Activated CD4-positive, alpha-beta T cell treated with anti-CD3 and anti-CD28 coated beads for 36 hours (primary cell): ENCODE measurements at regions of chr1 and their contacts with region 1.

Region 1: DNA sequence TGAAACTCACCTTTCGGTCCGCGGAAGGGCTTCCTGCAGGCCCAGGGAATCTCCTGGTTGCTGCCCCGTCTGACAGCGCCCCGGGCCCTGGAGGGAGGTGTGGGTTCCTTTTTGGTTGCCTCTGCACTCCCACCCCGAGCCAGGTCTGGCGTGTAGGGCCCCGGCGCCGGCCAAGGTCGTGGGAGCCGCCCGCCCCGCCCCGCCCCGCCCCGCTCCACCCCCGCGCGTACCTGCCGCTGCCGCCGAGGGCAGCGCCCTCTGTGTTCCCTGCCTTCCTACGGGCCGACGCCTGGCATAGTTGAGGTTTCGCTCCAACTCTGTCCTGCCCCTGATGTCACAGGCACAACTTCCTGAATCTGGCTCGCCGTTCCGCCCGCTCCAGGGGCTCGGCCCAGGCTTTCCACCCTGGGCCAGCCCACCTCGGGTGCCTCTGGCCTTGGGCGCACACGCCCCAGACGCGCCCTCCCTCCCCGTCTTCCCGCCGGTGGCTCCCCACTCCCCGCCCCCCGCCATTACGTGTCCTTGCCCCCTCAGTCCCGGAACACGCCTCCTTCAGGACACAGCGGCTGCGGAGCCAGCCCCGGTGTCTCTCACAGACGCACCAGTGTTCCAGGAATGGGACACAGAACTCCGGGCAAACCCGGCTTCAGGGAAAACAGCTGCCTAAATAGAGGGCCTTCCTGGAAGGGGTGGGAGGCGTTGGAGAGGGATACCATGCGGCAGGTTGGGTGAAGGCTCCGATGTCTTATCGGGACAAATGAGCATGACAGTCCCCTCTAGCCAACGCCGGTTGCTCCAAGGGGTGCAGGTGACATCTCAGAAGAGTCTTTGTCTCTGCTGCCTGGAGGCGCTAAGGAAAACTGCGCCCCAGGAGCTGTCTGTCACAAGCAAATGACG is at the start of gene KIAA0040:
- DNase-seq: peak; percentile 81
- ATAC-seq: peak; percentile 65
- H3K4me3 Mint-ChIP-seq: peak within 1 kb of the TSS; percentile 99
- H3K27ac Mint-ChIP-seq: peak within 1 kb of the TSS; percentile 93
- H3K4me1 Mint-ChIP-seq: peaks cover 47% of the 10 kb centered on the region
- H3K27me3 Mint-ChIP-seq: no peaks in the 10 kb centered on the region
- total RNA-seq, gene KIAA0040: 25.4 to 26.1 TPM

Region 2: GRCh38 chr1:173867753-173868265 is 1325.1 kb before region 1 on chr1 and contains the start of gene GAS5:
- CTCF ChIA-PET with region 1: no interaction called
- POLR2A ChIA-PET with region 1: no interaction called
- intact Hi-C with region 1: loop called (anchors 2 to 10 kb)
- DNase-seq: peak; percentile 100
- ATAC-seq: peak; percentile 82
- H3K4me3 Mint-ChIP-seq: peak within 1 kb of the TSS; percentile 91
- H3K27ac Mint-ChIP-seq: peak within 1 kb of the TSS; percentile 97
- H3K4me1 Mint-ChIP-seq: peaks cover 57% of the 10 kb centered on the region
- H3K27me3 Mint-ChIP-seq: no peaks in the 10 kb centered on the region
- total RNA-seq, gene GAS5: 878 to 1,203 TPM

Region 3: GRCh38 chr1:174159252-174160108 is 1033.4 kb before region 1 on chr1 and contains the start of gene RABGAP1L:
- CTCF ChIA-PET with region 1: no interaction called
- POLR2A ChIA-PET with region 1: no interaction called
- intact Hi-C with region 1: loop called in 1 of 2 experiments (anchors 5 kb)
- DNase-seq: peak; percentile 97
- ATAC-seq: peak; percentile 83
- H3K4me3 Mint-ChIP-seq: peak within 1 kb of the TSS; percentile 93
- H3K27ac Mint-ChIP-seq: peak within 1 kb of the TSS; percentile 95
- H3K4me1 Mint-ChIP-seq: peaks cover 59% of the 10 kb centered on the region
- H3K27me3 Mint-ChIP-seq: no peaks in the 10 kb centered on the region
- total RNA-seq, gene RABGAP1L: 22.6 to 29.9 TPM

Region 4: DNA sequence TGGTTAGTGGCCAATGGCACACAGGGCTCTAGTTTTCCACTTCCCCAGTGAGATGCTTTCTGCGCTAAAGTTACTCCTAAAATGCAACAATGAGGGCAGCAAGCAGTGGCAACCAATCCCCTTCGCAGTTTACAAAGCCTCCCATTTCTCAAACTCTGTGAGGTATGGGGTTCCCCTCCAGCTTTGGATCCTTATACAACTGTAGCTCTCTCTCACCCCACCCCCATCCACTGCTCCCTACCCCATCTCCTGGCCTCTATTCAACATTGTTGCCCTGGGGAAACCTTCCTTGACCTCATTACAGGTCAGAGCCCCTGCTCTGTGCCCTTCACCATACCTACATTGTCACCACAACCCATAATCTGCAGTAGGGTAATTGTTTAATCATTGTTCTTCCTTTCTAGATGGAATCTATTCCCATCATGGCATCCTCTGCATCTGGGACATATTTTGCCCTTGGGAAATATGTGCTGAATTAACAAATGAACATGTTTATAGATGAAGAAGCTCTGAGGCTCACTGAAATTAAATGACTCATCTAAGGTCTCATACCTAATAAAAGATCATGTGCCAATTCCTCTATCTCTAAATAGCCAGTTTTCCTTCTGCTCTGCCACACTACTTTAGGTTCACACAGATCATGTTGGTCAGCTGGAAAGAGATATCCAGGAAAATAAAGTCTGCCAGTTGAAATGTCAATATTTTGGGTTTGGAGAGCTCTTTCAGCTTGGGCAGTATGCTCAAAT is 12.9 kb before region 1 on chr1:
- CTCF ChIA-PET with region 1: interaction called, 10 read pairs
- POLR2A ChIA-PET with region 1: interaction called, 6 read pairs
- intact Hi-C with region 1: no loop called
- DNase-seq: no peak
- ATAC-seq: no peak
- H3K4me3 Mint-ChIP-seq: no peak overlapping the region
- H3K27ac Mint-ChIP-seq: no peak overlapping the region
- H3K4me1 Mint-ChIP-seq: peaks cover 62% of the 10 kb centered on the region
- H3K27me3 Mint-ChIP-seq: no peaks in the 10 kb centered on the region

Region 5: DNA sequence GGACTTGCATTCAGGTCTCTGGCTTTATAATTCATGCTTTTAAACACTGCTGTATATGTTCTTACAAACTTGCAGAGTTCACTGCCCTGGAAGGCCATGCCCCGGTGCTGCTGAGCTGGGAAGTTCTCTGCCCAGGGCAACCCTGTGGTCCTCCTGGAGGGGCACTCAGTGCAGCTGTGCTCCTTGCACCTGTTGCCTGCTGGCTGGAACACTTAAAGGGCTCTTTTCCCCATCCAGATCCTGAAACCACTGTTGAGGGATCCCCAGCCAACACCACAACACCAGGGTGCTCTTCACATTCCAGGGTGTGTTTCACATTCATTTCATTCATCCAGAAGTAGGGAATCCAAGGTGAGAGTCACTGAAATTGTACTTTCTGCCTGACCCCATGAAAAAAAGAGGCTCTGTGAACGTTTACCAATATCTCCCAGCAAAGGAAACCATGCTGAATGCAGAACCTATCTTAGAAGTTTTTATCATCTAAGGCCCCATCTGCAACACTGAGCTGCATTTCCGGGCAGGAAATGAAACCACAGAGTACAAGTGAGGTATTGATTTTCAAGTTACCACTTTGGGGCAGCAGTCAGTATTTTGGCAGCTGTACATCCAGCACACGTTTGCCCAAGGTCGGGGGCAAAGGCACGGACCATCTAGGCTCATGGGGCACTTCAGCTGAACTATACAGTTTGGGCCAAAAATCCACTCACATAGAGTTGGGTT is 16.1 kb after region 1 on chr1:
- CTCF ChIA-PET with region 1: interaction called, 11 read pairs
- POLR2A ChIA-PET with region 1: interaction called, 4 read pairs
- intact Hi-C with region 1: loop called (anchors 1 kb)
- DNase-seq: peak; percentile 58
- ATAC-seq: peak; percentile 60
- H3K4me3 Mint-ChIP-seq: peak overlapping the region; percentile 55
- H3K27ac Mint-ChIP-seq: peak overlapping the region; percentile 94
- H3K4me1 Mint-ChIP-seq: peaks cover 63% of the 10 kb centered on the region
- H3K27me3 Mint-ChIP-seq: no peaks in the 10 kb centered on the region

Region 6: DNA sequence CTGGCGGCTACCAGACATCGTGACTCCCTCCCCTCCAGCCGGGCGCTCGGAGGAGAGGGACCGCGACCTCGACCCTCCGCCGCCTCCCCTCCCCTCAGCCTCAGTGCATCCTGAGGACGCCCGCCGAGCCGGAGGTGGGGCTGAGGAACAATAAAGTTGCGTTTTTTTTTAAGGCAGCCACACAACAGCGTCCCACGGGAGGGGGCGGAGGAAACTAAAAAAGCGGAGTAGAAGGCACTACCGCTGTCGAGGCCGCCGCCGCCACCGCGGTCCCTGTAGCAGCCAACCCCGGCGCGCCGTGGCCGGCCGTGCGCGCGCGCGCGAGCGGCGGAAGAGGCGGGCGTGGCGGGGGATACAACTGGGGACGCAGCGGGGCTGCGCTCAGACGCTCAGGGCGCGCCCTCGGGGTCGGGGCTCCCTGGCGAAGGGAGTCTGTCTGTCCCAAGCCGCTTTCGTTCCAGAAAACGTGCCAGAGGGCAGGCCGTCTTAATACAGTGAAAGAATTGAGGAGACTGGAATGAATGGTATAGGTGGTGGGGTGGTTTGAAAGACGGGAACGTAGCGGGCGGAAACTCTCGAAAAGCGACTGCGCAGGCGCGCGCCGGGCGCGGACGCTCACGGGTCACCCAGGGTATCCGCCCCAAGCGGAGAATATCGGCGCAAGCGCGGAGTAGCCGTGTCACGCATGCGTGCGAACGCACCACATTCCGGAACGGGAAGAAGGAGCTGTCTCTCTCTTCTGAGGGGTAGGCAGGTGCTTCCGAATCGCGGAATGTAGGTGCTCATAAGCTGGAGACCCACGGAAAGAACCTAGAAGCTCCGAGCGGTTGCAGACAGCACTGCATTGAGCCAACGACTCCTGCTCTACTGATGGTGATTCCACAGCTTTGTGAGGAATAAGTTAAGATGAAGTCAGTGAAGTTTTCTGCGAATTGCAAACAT is 1014.4 kb after region 1 on chr1 and contains the start of gene COP1:
- CTCF ChIA-PET with region 1: no interaction called
- POLR2A ChIA-PET with region 1: no interaction called
- intact Hi-C with region 1: loop called in 1 of 2 experiments (anchors 2 kb)
- DNase-seq: peak; percentile 97
- ATAC-seq: peak; percentile 82
- H3K4me3 Mint-ChIP-seq: peak within 1 kb of the TSS; percentile 98
- H3K27ac Mint-ChIP-seq: peak within 1 kb of the TSS; percentile 100
- H3K4me1 Mint-ChIP-seq: peaks cover 28% of the 10 kb centered on the region
- H3K27me3 Mint-ChIP-seq: no peaks in the 10 kb centered on the region
- total RNA-seq, gene COP1: 38.7 to 43.4 TPM